Testis (tissue), 5 donors: ENCODE measurements at regions of chrX and their contacts with region 1.

Region 1: GRCh38 chrX:17374619-17375366 is at the start of gene NHS:
- DNase-seq: peak; percentile 80
- H3K4me3 ChIP-seq: peak within 1 kb of the TSS; percentile 60 to 74
- H3K27ac ChIP-seq: peak within 1 kb of the TSS; percentile 76 to 79
- H3K4me1 ChIP-seq: no peaks in the 10 kb centered on the region
- H3K27me3 ChIP-seq: no peaks in the 10 kb centered on the region
- CTCF ChIP-seq: peak in 2 of 3 experiments; percentile 35 to 42
- POLR2A ChIP-seq: no peak
- total RNA-seq, gene NHS: 21.8 to 25.7 TPM

Region 2: DNA sequence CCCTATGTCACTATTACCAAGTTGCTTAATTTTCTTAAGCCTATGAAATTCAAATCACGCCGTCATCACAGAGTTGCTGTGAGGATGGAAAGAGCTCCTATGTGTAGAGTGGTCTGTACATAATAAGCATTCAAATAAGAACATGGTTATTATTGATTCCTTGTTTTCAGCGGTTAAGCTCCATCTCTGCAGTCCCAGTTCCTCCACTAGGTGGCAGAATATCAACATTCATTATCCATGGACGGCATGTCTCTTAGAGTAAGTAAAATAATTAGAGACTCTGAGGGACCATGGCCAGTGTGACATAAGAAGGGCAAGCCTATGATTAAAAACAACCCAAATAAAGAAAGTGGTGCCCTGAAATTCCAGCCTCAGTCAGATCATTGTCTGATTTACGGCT is 132.3 kb before region 1 on chrX:
- intact Hi-C with region 1: loop called (anchors 10 kb)
- DNase-seq: peak; percentile 65
- H3K4me3 ChIP-seq: no peak overlapping the region
- H3K27ac ChIP-seq: no peak overlapping the region
- H3K4me1 ChIP-seq: no peaks in the 10 kb centered on the region
- H3K27me3 ChIP-seq: no peaks in the 10 kb centered on the region
- CTCF ChIP-seq: peak; percentile 69 to 76 (median 70)
- POLR2A ChIP-seq: no peak

Region 3: DNA sequence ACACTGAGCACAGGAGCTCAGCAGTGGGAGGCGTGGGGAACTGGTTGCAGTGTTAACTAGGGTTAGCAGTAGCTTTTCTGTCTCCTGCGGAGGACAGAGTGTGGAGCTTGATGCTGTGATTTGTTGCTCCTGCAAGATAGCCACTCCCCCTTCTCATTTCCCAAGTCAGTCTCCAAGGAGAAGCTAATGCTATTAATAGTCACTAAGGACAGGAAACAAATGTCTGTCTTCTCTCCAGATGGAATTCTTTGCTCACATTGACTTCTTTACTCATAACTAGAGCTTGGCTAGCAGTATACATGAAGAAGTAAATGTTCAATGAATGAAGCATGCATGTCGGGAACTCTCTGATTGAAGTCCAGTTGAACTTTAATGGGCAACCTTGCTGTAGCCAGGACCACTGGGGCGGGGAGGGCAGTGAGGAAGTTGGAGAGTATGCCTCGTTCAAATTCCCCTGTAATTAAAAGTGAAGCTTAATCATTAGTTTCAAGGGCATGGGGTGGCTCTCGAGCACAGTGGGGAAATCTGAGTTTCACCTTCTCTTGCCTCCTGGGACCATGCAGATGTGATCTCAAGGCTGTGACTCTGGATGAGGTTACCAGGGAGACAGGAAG is 205.9 kb after region 1 on chrX:
- intact Hi-C with region 1: loop called (anchors 10 kb)
- DNase-seq: peak; percentile 38
- H3K4me3 ChIP-seq: no peak overlapping the region
- H3K27ac ChIP-seq: no peak overlapping the region
- H3K4me1 ChIP-seq: peaks cover 12% of the 10 kb centered on the region
- H3K27me3 ChIP-seq: no peaks in the 10 kb centered on the region
- CTCF ChIP-seq: no peak
- POLR2A ChIP-seq: no peak